HAP-1 (cell line): ENCODE measurements at regions of chr11 and their contacts with region 1.

Region 1: DNA sequence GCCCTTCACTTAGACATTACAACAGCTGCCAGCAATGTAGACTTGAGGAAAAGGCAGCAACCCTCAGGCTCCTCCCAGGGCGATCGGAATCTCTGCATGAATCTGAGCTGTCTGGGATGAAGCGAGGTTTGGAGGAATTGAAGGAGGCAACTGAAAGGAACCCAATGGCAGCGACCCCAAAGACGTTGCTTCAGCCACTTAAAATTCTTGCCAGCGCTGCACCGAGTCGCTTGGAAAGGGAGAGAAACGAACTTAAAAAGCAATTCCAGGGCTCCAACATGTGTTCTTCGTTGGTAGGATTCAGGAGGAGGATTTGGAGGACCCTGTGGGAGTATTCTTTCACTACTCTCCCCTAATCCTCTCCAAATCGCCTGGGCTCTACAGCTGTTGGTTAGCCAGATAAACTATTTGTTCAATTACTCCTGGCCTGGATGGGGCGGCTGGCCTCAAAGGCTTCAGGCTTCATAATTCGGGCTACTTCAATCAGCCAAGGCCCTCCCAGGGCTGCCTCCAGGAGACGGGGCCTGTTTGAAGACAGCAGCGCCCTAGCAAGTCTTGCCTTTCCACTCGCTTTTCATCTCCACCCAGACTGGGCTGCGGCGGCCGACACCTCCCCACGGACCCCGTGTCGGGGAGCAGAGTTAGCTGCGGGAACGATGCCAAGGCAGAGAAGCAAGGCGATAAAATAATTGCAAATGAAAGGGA is 72.4 kb upstream of the TMEM45B start:
- DNase-seq: no peak
- H3K4me3 ChIP-seq: no peak overlapping the region
- H3K4me1 ChIP-seq: no peaks in the 10 kb centered on the region
- H3K27me3 ChIP-seq: no peaks in the 10 kb centered on the region

Region 2: DNA sequence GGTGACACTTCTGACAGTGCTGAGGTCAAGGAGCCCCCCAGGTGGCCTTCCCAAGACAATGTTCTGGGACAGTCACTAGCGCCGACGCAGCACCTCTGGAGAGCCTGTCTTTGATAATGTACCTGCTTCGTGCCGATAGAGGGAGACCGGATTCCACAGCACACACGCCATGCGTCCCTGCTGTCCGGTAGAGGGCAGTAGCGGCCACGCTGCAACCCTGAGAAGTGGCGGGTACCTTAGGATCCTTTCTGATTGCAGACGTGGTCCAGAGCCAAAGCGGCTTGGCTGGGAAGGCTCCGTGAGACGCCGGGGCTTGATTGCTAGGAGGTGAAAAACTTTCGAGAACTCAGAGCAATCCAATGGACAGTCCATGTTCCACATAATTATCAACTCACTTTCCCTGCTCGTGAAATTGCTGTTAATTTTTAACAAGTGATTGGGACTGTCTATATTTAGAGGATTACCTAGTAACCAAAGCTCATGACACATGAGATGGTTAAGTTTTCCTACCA is 379.1 kb before region 1 on chr11:
- in situ Hi-C with region 1: loop called (anchors 10 kb)
- DNase-seq: peak; percentile 84 to 87
- H3K4me3 ChIP-seq: no peak overlapping the region
- H3K4me1 ChIP-seq: no peaks in the 10 kb centered on the region
- H3K27me3 ChIP-seq: peaks cover 38% of the 10 kb centered on the region

Region 3: GRCh38 chr11:130103296-130103814 is 360.1 kb after region 1 on chr11:
- in situ Hi-C with region 1: no loop called
- DNase-seq: no peak
- H3K4me3 ChIP-seq: no peak overlapping the region
- H3K4me1 ChIP-seq: no peaks in the 10 kb centered on the region; the same call in 1 of the 2 replicates
- H3K27me3 ChIP-seq: no peaks in the 10 kb centered on the region